Activated B cell treated with CpG ODN at 0.5 μM for 24 hours (primary cell): ENCODE measurements at regions of chr7 and their contacts with region 1.

Region 1: GRCh38 chr7:91880413-91881241 is at the start of gene MTERF1:
- DNase-seq: peak; percentile 92
- ATAC-seq: peak; percentile 98
- H3K4me3 Mint-ChIP-seq: peak within 1 kb of the TSS; percentile 100
- H3K27ac Mint-ChIP-seq: peak within 1 kb of the TSS; percentile 92
- H3K4me1 Mint-ChIP-seq: peaks cover 30% of the 10 kb centered on the region
- H3K27me3 Mint-ChIP-seq: no peaks in the 10 kb centered on the region
- CTCF ChIP-seq: peak; percentile 27
- total RNA-seq, gene MTERF1: 26.2 and 30.3 TPM in 2 replicates

Region 2: GRCh38 chr7:90346336-90347125 is 1534.1 kb before region 1 on chr7 and contains the start of gene GTPBP10:
- CTCF ChIA-PET with region 1: no interaction called
- POLR2A ChIA-PET with region 1: no interaction called
- intact Hi-C with region 1: loop called (anchors 5 kb)
- DNase-seq: peak; percentile 90
- ATAC-seq: peak; percentile 97
- H3K4me3 Mint-ChIP-seq: peak within 1 kb of the TSS; percentile 96
- H3K27ac Mint-ChIP-seq: peak within 1 kb of the TSS; percentile 98
- H3K4me1 Mint-ChIP-seq: peaks cover 35% of the 10 kb centered on the region
- H3K27me3 Mint-ChIP-seq: no peaks in the 10 kb centered on the region
- CTCF ChIP-seq: peak; percentile 37
- total RNA-seq, gene GTPBP10: 28.8 and 29.5 TPM in 2 replicates

Region 3: DNA sequence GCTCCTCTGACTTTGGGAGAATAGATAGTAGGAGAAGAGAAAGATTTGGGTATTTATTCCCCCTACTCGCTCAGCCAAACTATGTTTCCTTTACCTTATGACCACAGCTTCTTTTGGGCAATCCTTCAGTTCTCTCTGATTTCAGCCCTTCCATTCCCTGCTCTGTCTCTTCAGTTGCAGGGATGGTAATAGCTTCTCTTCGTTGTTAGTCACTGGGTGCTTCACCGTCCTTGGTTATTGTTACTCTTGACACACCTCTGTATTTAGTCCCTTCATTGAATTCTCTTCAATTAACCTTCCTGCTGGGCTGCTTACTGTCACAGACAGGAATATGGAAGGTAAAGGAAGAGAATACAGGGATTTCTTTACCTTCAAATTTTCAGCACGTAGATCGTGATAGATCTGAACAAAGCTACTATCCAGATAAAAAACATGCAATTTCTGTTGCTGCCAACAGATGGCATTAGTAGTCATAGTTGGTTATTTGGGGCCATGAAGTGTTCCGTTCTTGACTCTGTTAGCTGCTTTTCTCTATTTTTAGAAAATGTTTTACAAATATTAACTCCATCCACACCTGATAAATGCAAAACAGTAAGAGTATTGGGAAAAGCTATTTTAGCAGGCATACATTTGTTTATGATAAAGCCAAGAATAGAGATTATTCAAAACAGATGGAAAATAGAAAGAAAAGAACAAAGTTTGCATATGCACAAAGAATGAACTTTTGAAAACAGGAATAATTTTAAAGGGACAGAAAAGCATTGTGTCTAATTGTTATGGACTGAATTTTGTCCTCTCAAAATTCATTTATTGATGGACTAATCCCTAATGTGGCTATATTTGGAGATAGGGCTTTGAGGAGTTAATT is 1425.2 kb before region 1 on chr7:
- CTCF ChIA-PET with region 1: no interaction called
- POLR2A ChIA-PET with region 1: no interaction called
- intact Hi-C with region 1: loop called (anchors 10 kb)
- DNase-seq: no peak
- ATAC-seq: peak; percentile 73
- H3K4me3 Mint-ChIP-seq: peak overlapping the region; percentile 46
- H3K27ac Mint-ChIP-seq: no peak overlapping the region
- H3K4me1 Mint-ChIP-seq: peaks cover 8% of the 10 kb centered on the region
- H3K27me3 Mint-ChIP-seq: peaks cover 6% of the 10 kb centered on the region
- CTCF ChIP-seq: peak; percentile 64

Region 4: GRCh38 chr7:91089382-91089963 is 791.2 kb before region 1 on chr7:
- CTCF ChIA-PET with region 1: interaction called, 12 read pairs
- POLR2A ChIA-PET with region 1: no interaction called
- intact Hi-C with region 1: loop called (anchors 1 kb)
- DNase-seq: no peak
- ATAC-seq: peak; percentile 58
- H3K4me3 Mint-ChIP-seq: peak overlapping the region; percentile 19
- H3K27ac Mint-ChIP-seq: no peak overlapping the region
- H3K4me1 Mint-ChIP-seq: peaks cover 6% of the 10 kb centered on the region
- H3K27me3 Mint-ChIP-seq: no peaks in the 10 kb centered on the region
- CTCF ChIP-seq: peak; percentile 92

Region 5: GRCh38 chr7:91835846-91836368 is 44.7 kb before region 1 on chr7:
- CTCF ChIA-PET with region 1: interaction called, 20 read pairs
- POLR2A ChIA-PET with region 1: interaction called, 3 read pairs
- intact Hi-C with region 1: no loop called
- DNase-seq: no peak
- ATAC-seq: no peak
- H3K4me3 Mint-ChIP-seq: no peak overlapping the region
- H3K27ac Mint-ChIP-seq: no peak overlapping the region
- H3K4me1 Mint-ChIP-seq: no peaks in the 10 kb centered on the region
- H3K27me3 Mint-ChIP-seq: no peaks in the 10 kb centered on the region
- CTCF ChIP-seq: no peak

Region 6: DNA sequence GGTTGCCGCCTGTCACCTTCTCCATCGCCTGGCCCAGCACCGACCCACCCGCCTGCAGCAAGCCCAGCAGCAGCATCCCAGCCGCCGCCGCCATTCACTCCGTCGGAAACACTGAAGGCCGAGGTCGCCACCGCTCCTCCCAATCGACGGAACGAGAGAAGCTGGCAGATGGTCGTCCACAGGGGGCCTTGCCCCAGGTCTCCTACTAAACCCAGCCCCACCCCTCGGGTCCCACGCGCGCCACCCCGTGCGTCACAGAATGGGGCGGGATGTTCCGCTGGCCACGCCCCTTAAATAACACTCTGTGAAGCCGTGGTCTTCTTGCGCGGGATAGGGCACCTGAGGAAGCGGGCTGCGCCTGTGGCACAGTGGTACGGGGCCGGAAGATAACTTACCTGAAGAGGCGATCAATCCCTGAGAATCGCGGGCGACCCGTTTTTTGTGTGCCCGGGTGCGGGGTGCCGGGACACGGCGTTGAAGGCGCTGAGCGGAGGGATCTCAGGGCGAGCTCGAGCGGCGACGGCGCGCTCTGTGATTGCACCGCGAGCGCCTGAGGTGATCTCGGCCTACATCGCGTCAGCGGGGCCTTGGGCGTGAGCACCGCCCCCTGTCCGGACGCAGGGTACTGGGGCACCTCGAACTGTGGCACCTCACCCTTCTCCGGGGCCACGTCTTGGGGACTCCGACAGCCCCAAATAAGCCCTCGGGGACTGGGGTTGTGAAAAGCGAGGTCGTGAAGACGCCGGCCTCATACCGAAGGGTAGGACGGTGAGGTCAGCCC is 253.8 kb after region 1 on chr7 and contains the start of gene CYP51A1:
- CTCF ChIA-PET with region 1: no interaction called
- POLR2A ChIA-PET with region 1: no interaction called
- intact Hi-C with region 1: loop called (anchors 2 kb)
- DNase-seq: peak; percentile 97
- ATAC-seq: peak; percentile 83
- H3K4me3 Mint-ChIP-seq: peak within 1 kb of the TSS; percentile 99
- H3K27ac Mint-ChIP-seq: peak within 1 kb of the TSS; percentile 100
- H3K4me1 Mint-ChIP-seq: peaks cover 47% of the 10 kb centered on the region
- H3K27me3 Mint-ChIP-seq: no peaks in the 10 kb centered on the region
- CTCF ChIP-seq: no peak
- total RNA-seq, gene CYP51A1: 90.9 and 92.8 TPM in 2 replicates

Region 7: DNA sequence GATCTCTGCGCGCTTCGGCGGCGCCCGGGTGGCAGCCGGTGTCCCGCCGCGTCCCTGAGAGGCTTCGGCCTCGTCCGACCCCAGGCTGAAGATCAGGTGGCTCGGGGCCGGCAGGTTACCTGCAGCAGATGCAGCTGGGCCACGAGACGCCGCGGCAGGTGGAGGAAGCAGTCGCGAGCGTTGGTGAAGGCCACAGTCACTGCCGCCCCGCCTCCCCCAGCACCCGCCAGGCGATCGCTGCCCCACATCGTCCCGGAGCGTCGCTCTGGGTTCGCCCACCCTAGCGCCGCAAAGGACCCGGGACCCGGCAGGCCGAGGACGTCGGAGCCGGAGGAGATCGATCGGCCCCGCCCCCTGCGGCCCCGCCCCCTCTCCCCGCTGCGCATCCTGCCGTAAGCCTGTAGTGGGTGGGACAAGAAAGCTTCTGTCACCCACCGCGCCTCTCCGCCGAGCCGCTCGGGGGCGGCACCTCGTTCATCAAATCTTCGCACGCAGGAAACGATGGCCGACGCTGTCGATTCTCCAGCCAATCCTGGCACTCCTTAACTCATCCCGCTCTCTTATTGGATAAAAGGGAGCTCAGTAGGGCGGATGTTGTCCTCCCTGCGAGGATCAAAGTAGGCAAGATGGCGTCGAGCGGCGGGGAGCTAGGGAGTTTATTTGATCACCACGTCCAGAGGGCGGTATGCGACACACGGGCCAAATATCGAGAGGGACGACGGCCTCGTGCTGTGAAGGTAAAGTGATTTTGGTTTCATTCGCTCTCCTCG is 647.7 kb after region 1 on chr7 and contains the starts of genes PEX1 and RBM48:
- CTCF ChIA-PET with region 1: no interaction called
- POLR2A ChIA-PET with region 1: interaction called, 9 read pairs
- intact Hi-C with region 1: loop called (anchors 1 kb)
- DNase-seq: peak; percentile 80
- ATAC-seq: peak; percentile 92
- H3K4me3 Mint-ChIP-seq: peak within 1 kb of the TSS; percentile 89
- H3K27ac Mint-ChIP-seq: peak within 1 kb of the TSS; percentile 93
- H3K4me1 Mint-ChIP-seq: peaks cover 24% of the 10 kb centered on the region
- H3K27me3 Mint-ChIP-seq: no peaks in the 10 kb centered on the region
- CTCF ChIP-seq: no peak
- total RNA-seq, gene PEX1: 18.2 and 21.8 TPM in 2 replicates
- total RNA-seq, gene RBM48: 21.6 and 24.3 TPM in 2 replicates

Region 8: DNA sequence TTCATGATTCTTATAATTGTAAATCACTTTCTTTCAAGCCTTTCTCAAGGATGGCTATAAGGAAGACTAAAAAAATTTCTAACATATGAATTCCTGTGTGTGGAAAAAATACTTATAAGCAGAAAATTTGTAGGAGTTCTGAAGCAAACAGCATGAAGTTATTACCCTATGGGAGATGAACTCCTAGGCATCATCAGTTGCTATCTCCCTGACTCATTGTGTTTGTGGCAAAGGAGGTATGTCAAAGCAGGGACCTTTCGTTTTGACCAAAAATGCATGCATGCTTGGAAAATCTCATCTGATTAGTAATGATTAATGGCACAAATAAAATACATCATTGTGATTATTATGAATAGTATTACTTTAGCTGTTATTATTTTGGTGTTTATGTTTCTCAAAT is 1634.5 kb after region 1 on chr7:
- CTCF ChIA-PET with region 1: no interaction called
- POLR2A ChIA-PET with region 1: no interaction called
- intact Hi-C with region 1: no loop called
- DNase-seq: no peak
- ATAC-seq: no peak
- H3K4me3 Mint-ChIP-seq: no peak overlapping the region
- H3K27ac Mint-ChIP-seq: no peak overlapping the region
- H3K4me1 Mint-ChIP-seq: no peaks in the 10 kb centered on the region
- H3K27me3 Mint-ChIP-seq: peaks cover 2% of the 10 kb centered on the region
- CTCF ChIP-seq: no peak